ENCODE measurements at regions of chr7 and their contacts with region 1.

Region 1: DNA sequence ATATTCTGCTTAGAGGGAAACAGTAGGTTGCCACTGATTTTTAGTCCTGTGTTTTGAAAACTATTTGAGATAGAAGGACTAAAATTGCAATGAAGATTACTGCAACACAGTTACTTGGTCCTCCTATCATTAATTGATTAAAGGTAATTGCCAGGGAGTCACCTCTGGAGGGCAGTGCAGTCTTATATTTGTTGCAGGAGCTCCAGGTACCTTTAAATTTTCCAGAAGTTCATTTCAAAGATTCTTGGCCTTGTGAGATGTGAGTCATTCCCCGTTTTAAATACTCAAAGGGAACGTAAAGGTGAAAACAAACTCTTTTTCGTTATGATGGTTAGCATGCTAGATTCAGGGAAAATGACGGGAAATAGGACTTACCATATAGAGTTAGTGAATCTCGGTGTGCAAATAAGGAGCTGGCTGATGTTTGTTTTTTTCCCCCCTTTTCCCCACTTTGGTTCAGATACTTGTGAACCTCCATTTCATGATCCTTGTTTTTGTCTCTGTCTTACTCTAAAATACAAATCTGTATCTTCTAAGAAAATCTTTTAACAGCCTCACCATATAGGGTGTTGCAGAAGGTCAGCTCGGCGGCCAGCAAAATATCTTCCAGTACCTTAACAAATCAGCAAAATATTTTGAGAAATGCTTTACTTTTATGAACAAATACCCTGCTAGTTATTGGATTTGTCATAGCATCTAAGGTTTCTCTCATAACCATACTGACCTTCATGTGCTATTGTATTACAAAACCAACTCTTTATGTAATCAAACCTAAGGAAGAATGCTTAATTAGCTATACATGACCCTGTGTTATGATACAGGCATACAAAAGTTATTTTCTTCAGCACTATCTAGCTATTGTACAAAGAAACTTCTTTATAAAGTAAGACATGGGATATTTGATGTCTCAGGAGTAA is 143.0 kb upstream of the HDAC9 start:
- DNase-seq: peak; percentile 35
- ATAC-seq: peak; percentile 73
- H3K4me3 ChIP-seq: no peak overlapping the region
- H3K27ac ChIP-seq: no peak overlapping the region
- H3K4me1 ChIP-seq: peaks cover 0 to 3% of the 10 kb centered on the region in 2 experiments; a peak in 2 of 4 replicates
- H3K27me3 ChIP-seq: no peaks in the 10 kb centered on the region
- CTCF ChIP-seq: peak; percentile 43 to 76 (median 54); a peak in 4 of 6 replicates
- POLR2A ChIP-seq: no peak
- RAD21 ChIP-seq: peak; percentile 82

Region 2: DNA sequence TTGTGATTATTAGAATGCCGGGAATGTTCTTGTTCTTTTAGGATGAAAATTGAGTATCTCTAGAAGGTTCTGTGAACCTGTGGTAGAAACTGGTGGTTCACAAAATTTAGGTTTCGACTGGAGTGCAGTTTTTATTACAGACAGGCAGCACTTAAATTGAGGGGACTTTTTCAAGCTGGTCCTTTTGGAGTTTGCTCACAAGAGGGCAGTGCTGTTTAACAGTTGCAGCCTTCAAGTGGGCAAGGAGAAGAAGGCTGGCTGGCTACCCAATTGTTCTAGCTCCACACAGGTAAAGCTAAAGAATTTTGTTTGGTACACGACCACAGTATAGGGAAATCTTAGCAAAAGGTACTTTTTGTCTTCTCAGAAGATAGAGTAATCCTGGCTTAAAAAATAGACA is 645.9 kb before region 1 on chr7:
- CTCF ChIA-PET with region 1: interaction called, 15 read pairs
- POLR2A ChIA-PET with region 1: no interaction called
- RAD21 ChIA-PET with region 1: no interaction called
- intact Hi-C with region 1: no loop called
- DNase-seq: peak; percentile 65
- ATAC-seq: peak; percentile 98
- H3K4me3 ChIP-seq: no peak overlapping the region
- H3K27ac ChIP-seq: no peak overlapping the region
- H3K4me1 ChIP-seq: no peaks in the 10 kb centered on the region
- H3K27me3 ChIP-seq: no peaks in the 10 kb centered on the region
- CTCF ChIP-seq: peak; percentile 53 to 71 (median 55)
- POLR2A ChIP-seq: no peak
- RAD21 ChIP-seq: peak; percentile 86

Region 3: GRCh38 chr7:18570890-18571478 is 218.4 kb after region 1 on chr7:
- CTCF ChIA-PET with region 1: interaction called, 93 read pairs
- POLR2A ChIA-PET with region 1: interaction called, 7 read pairs
- RAD21 ChIA-PET with region 1: interaction called, 7 to 8 read pairs
- intact Hi-C with region 1: loop called (anchors 1 kb)
- DNase-seq: peak; percentile 31
- ATAC-seq: peak; percentile 66; the same call in 1 of the 2 replicates
- H3K4me3 ChIP-seq: no peak overlapping the region
- H3K27ac ChIP-seq: no peak overlapping the region
- H3K4me1 ChIP-seq: peaks cover under 1 to 1% of the 10 kb centered on the region in 2 experiments; a peak in 2 of 4 replicates
- H3K27me3 ChIP-seq: no peaks in the 10 kb centered on the region
- CTCF ChIP-seq: peak; percentile 32 to 68 (median 59); a peak in 4 of 6 replicates
- POLR2A ChIP-seq: no peak
- RAD21 ChIP-seq: peak; percentile 64

Region 4: DNA sequence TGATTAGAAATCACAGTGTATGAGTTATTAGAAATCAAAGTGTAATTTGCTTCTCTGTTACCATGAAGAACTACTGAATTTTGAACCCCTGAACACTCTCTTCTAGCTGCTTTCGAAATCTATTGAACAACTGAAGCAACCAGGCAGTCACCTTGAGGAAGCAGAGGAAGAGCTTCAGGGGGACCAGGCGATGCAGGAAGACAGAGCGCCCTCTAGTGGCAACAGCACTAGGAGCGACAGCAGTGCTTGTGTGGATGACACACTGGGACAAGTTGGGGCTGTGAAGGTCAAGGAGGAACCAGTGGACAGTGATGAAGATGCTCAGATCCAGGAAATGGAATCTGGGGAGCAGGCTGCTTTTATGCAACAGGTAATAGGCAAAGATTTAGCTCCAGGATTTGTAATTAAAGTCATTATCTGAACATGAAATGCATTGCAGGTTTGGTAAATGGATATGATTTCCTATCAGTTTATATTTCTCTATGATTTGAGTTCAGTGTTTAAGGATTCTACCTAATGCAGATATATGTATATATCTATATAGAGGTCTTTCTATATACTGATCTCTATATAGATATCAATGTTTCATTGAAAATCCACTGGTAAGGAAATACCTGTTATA is 313.6 kb after region 1 on chr7:
- CTCF ChIA-PET with region 1: interaction called, 7 read pairs
- POLR2A ChIA-PET with region 1: no interaction called
- RAD21 ChIA-PET with region 1: interaction called in 1 of 2 experiments, 5 read pairs
- intact Hi-C with region 1: loop called (anchors 2 kb)
- DNase-seq: peak; percentile 78
- ATAC-seq: peak; percentile 98
- H3K4me3 ChIP-seq: no peak overlapping the region
- H3K27ac ChIP-seq: no peak overlapping the region
- H3K4me1 ChIP-seq: peaks cover 6 to 24% of the 10 kb centered on the region in 2 experiments
- H3K27me3 ChIP-seq: no peaks in the 10 kb centered on the region
- CTCF ChIP-seq: peak; percentile 67 to 97 (median 91); a peak in 5 of 6 replicates
- POLR2A ChIP-seq: no peak
- RAD21 ChIP-seq: peak; percentile 78

Region 5: GRCh38 chr7:19442016-19442785 is 1089.6 kb after region 1 on chr7:
- CTCF ChIA-PET with region 1: interaction called, 3 read pairs
- POLR2A ChIA-PET with region 1: no interaction called
- RAD21 ChIA-PET with region 1: no interaction called
- intact Hi-C with region 1: loop called (anchors 5 kb)
- DNase-seq: peak; percentile 50
- ATAC-seq: peak; percentile 99
- H3K4me3 ChIP-seq: no peak overlapping the region
- H3K27ac ChIP-seq: no peak overlapping the region
- H3K4me1 ChIP-seq: no peaks in the 10 kb centered on the region
- H3K27me3 ChIP-seq: no peaks in the 10 kb centered on the region
- CTCF ChIP-seq: peak; percentile 52 to 63 (median 58); a peak in 5 of 6 replicates
- POLR2A ChIP-seq: no peak
- RAD21 ChIP-seq: peak; percentile 79

Region 6: DNA sequence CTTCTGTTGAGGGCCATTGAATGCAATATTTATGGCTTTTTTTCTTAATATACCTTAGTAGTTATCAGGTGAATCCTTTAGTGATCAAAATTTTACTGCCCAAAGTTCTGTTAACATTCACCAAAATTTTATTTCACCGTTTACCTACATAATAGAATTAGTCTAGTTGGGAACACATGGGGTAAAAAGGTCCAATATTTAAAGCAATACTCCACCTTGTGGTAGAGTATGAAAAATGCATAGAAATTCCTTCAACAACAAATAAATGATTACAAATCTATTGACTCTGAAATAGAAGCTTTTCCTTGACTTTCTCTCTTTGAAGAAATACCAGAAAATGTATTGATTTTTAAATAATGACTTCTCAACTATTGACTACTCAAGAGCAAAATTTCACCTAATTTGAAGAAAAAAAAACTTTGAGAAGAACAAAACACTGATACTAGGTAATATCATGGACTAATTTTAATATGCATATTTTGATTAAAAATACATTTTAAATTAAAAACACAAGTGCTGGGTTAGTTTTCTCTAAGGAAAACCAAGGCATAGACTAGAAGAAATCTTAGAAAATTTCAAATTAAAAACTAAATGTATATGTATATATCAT is 1312.9 kb after region 1 on chr7:
- CTCF ChIA-PET with region 1: interaction called, 4 read pairs
- POLR2A ChIA-PET with region 1: no interaction called
- RAD21 ChIA-PET with region 1: no interaction called
- intact Hi-C with region 1: loop called (anchors 5 kb)
- DNase-seq: peak; percentile 12
- ATAC-seq: no peak
- H3K4me3 ChIP-seq: no peak overlapping the region
- H3K27ac ChIP-seq: no peak overlapping the region
- H3K4me1 ChIP-seq: no peaks in the 10 kb centered on the region
- H3K27me3 ChIP-seq: no peaks in the 10 kb centered on the region
- CTCF ChIP-seq: peak; percentile 33 to 69 (median 42); a peak in 4 of 6 replicates
- POLR2A ChIP-seq: no peak
- RAD21 ChIP-seq: peak; percentile 69

Measured in HCT116 (cell line).